ENCODE measurements at regions of chr2 and their contacts with region 1.

Region 1: DNA sequence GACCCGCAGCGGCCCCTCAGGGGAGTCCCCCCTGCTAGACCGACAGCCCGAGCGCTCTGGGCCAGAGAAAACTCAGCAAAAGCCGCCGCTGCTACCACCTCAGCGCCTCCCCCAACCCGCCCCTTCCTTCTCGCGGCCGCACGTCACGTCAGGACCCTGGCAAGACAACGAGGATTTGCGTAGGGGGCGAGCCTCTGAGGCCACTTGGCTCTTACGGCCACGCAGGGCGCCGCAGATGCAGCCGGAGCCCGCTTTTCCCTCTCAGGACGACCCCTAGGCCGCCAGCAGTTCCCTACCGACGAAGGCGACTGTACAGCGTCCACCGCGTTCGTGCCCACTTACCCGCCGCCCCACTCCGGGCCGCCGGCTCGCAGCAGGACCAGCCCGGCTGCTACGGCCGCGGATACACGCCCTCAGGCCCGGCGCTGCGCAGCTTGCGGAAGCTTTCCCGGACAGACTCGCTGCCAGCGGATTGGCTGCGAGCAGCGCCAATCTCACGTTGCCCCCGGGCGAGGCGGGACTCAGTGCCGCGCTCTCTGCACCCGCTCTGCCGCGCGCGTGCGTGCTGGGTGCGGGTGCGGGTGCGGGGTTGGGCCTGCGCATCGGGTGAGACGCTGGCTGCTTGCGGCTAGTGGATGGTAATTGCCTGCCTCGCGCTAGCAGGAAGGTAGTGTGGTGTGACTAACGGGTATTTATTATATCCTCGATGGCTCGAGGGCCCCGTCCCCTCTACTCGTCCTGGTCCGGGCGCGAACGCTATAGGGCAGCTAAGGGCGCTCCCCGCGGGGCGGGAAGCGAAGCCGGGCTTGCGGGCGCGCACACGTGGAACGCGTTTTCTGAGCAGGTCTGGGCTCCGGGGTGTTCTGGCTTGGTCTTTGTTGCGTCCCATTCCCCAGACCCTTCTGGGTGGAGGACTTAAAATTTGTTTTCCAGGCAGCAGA is at the starts of genes ORMDL1 and PMS1:
- DNase-seq: peak; percentile 96
- ATAC-seq: peak; percentile 94
- H3K4me3 Mint-ChIP-seq: peak within 1 kb of the TSS; percentile 94
- H3K27ac Mint-ChIP-seq: peak within 1 kb of the TSS; percentile 91
- H3K4me1 Mint-ChIP-seq: peaks cover 42% of the 10 kb centered on the region
- H3K27me3 Mint-ChIP-seq: no peaks in the 10 kb centered on the region
- total RNA-seq, gene ORMDL1: 98.2 to 105 TPM
- total RNA-seq, gene PMS1: 31.2 to 35.7 TPM

Region 2: DNA sequence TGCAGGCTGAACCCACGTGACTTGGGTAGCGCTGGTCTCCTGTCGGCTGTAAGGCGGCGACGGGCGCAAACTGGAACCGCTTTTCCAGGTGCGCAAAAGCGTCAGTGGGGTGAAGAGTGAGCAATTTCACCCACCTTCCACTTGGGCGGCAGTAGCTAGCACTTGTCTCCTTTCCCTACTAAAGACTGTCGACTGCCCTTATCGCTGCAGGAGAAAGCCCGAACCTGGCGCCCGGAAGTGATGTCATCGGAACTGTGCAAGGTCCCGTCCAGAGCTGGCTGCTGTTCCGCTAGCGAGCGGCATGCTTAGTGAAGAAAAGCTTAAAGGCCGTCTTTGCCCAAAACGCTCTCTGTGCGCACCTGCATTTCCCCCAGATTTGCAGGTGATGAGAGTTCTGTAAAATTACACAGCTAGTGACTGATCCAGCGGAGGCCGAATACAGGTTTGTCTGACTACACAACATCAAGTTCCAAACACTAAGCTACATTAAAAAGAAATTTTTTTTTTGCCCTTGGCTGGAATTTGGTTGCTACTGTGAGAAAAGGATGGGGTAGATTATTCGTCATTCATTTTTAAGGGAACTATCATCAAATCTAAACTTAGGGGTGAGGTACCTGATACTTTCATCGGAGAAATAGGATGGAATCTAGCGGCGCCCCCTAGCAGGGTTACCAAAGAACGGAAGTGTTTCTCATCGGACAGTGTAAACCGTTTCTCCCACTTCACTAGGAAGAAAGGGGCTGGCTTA is 21.5 kb before region 1 on chr2 and contains the start of gene OSGEPL1:
- POLR2A ChIA-PET with region 1: interaction called, 42 read pairs
- DNase-seq: peak; percentile 87
- ATAC-seq: peak; percentile 96
- H3K4me3 Mint-ChIP-seq: peak within 1 kb of the TSS; percentile 88
- H3K27ac Mint-ChIP-seq: peak within 1 kb of the TSS; percentile 98
- H3K4me1 Mint-ChIP-seq: peaks cover 11% of the 10 kb centered on the region
- H3K27me3 Mint-ChIP-seq: no peaks in the 10 kb centered on the region
- total RNA-seq, gene OSGEPL1: 14.3 to 15.5 TPM

Measured in activated naive CD8-positive, alpha-beta T cell treated with anti-CD3 and anti-CD28 coated beads, Interleukin-2, amount 10 ng/mL, durations not matched to agents 7 days and 5 days (primary cell).